HepG2 (cell line): ENCODE measurements at regions of chr5 and their contacts with region 1.

Region 1: GRCh38 chr5:154478224-154478565 is at the start of gene HAND1:
- DNase-seq: peak; percentile 25
- ATAC-seq: peak; percentile 66
- H3K4me3 ChIP-seq: peak within 1 kb of the TSS in 2 of 3 experiments; percentile 34 to 52; a peak in 2 of 6 replicates
- H3K27ac ChIP-seq: no peak within 1 kb of the TSS
- H3K4me1 ChIP-seq: peaks cover 13% of the 10 kb centered on the region
- H3K27me3 ChIP-seq: peaks cover 16 to 98% of the 10 kb centered on the region in 2 experiments
- CTCF ChIP-seq: no peak
- EP300 ChIP-seq: no peak
- POLR2A ChIP-seq: no peak
- RAD21 ChIP-seq: no peak
- total RNA-seq, gene HAND1: not detected in 2 replicates

Region 2: DNA sequence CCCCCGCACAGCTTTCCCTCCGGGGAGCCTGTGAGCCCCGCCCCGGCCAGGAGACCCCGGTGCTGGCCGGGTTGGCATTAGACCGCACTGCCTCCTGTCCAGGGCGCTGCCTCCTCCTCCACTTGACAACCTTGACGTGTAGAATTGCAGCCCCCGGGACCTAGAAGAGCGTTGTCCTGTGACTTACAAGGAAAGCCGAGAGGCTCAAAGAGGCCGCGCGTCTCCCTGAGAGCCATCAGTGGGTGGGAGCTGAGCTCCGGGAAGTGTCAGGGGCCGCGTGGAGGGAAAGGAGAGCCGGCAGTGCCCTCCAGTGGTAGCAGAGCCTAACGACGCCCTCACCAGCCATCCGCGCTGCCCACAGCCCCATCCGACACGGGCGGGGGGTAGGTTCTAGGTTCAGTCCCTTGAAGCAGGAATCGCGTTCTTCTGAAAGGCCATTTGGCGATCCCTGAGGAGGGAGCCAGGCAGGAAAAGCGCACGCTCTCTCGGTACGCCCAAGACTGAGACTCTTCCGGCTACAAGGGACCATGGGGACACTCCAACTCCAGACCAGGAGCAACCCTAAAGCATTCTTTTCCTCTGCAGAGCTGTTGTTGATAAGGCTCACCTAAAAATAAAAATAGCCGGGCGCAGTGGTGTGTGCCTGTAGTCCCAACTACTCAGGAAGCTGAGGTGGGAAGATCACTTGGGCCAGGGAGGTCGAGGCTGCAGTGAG is 73.0 kb before region 1 on chr5:
- CTCF ChIA-PET with region 1: no interaction called
- POLR2A ChIA-PET with region 1: no interaction called
- in situ Hi-C with region 1: no loop called
- intact Hi-C with region 1: no loop called
- DNase-seq: peak; percentile 59
- ATAC-seq: peak; percentile 99
- H3K4me3 ChIP-seq: peak overlapping the region in 1 of 3 experiments; percentile 62; a peak in 3 of 6 replicates
- H3K27ac ChIP-seq: no peak overlapping the region
- H3K4me1 ChIP-seq: 0 out of 2 replicates have a peak, but pooled peaks cover 9% of the 10 kb centered on the region
- H3K27me3 ChIP-seq: no peaks in the 10 kb centered on the region
- CTCF ChIP-seq: peak; percentile 99
- EP300 ChIP-seq: no peak
- POLR2A ChIP-seq: no peak
- RAD21 ChIP-seq: peak; percentile 99

Region 3: DNA sequence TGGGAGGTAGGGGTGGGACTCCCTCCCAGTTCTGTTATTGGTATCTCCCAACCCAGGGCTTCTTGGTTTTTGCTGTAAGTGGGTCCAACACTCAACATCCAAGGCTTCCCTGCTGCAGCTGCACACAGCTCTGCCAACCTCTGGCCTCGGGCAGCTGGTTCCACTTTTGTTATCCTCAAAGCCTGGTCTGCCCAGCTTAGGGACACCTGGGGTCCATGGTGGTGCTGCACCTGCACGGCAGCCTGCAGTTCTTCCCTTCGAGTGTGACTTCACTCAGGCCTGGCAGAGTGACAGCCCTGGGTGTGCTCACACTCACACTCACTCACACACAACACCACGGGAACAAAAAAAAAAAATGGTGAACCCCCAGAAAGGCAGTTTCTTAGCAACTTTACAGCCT is 47.7 kb before region 1 on chr5:
- CTCF ChIA-PET with region 1: no interaction called
- POLR2A ChIA-PET with region 1: no interaction called
- in situ Hi-C with region 1: no loop called
- intact Hi-C with region 1: no loop called
- DNase-seq: no peak
- ATAC-seq: no peak
- H3K4me3 ChIP-seq: no peak overlapping the region
- H3K27ac ChIP-seq: no peak overlapping the region
- H3K4me1 ChIP-seq: peaks cover 7% of the 10 kb centered on the region; the same call in 1 of the 2 replicates
- H3K27me3 ChIP-seq: no peaks in the 10 kb centered on the region
- CTCF ChIP-seq: no peak
- EP300 ChIP-seq: no peak
- POLR2A ChIP-seq: no peak
- RAD21 ChIP-seq: no peak

Region 4: DNA sequence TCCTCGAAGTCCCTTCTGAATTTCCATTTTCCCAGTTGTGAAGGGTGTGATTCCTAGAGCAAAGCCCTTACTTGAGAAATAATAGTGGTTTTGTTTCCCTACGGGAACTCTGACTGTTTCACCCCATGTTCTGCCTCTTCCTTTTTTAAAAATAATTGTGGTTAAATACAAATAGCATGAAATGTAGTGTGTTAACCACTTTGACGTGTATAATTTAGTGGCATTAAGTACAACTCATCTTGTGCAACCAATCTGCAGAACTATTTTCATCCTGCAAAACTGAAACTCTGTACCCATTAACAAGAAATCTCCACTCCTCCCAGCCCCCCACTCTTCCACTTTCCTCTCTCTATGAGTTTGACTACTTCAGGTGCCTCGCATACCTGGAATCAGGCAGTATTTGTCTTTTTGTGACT is 35.5 kb after region 1 on chr5:
- CTCF ChIA-PET with region 1: no interaction called
- POLR2A ChIA-PET with region 1: no interaction called
- in situ Hi-C with region 1: no loop called
- intact Hi-C with region 1: loop called (anchors 1 kb)
- DNase-seq: no peak
- ATAC-seq: no peak
- H3K4me3 ChIP-seq: no peak overlapping the region
- H3K27ac ChIP-seq: no peak overlapping the region
- H3K4me1 ChIP-seq: no peaks in the 10 kb centered on the region
- H3K27me3 ChIP-seq: peaks cover 0 to 10% of the 10 kb centered on the region in 2 experiments; a peak in 2 of 5 replicates
- CTCF ChIP-seq: no peak
- EP300 ChIP-seq: no peak
- POLR2A ChIP-seq: no peak
- RAD21 ChIP-seq: no peak

Region 5: DNA sequence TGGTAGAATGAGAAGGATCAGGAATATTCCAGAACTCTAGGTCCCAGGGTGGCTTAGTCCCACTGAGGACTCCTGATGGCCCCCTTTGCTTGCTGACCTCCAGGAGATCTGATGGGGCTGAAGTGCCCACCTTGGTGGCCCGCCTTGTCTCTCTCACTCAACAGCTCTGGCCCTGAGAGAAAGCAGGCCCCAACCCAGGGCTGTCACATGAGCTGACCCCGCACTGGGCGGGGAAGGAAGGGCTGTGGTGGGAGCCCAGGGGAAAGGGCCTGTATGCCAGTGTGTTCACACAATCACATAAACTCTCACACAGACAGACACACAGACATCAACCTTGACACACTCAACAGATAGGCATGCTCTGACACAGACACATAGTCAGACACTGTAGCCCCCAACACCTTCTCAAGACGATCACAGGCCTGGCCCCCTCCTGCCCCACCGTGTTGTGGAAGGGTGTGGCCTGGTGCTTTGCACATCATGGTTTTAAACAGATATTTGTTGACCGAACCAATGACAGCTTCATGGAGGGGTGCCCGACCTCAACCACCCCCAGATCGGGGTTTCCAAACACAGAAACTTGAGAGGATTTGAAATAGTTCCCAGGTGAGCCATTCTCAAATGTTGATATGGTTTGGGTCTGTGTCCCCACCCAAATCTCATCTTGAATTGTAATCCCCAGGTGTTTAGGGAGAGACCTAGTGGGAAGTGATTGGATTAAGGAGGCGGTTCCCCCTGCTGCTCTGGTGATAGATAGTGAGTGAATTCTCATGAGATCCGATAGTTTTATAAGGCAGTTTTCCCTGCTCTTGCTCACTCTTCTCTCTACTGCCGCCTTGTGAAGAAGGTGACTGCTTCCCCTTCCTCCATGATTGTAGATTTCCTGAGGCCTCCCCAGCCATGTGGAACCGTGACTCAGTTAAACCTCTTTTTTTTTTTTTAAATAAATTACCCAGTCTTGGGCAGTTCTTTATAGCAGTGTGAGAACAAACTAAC is 48.3 kb after region 1 on chr5:
- CTCF ChIA-PET with region 1: no interaction called
- POLR2A ChIA-PET with region 1: no interaction called
- in situ Hi-C with region 1: loop called (anchors 5 kb)
- intact Hi-C with region 1: no loop called
- DNase-seq: no peak
- ATAC-seq: no peak
- H3K4me3 ChIP-seq: no peak overlapping the region
- H3K27ac ChIP-seq: no peak overlapping the region
- H3K4me1 ChIP-seq: no peaks in the 10 kb centered on the region
- H3K27me3 ChIP-seq: peaks cover 0 to 8% of the 10 kb centered on the region in 2 experiments; a peak in 3 of 5 replicates
- CTCF ChIP-seq: no peak
- EP300 ChIP-seq: no peak
- POLR2A ChIP-seq: no peak
- RAD21 ChIP-seq: no peak